ENCODE measurements at regions of chr4 and their contacts with region 1.

Region 1: GRCh38 chr4:74109116-74109869 is 10.3 kb upstream of the CXCL2 start:
- DNase-seq: peak; percentile 99
- ATAC-seq: peak; percentile 79
- H3K4me3 ChIP-seq: peak overlapping the region; percentile 45
- H3K27ac ChIP-seq: peak overlapping the region; percentile 96
- H3K4me1 ChIP-seq: peaks cover 65% of the 10 kb centered on the region
- H3K27me3 ChIP-seq: no peaks in the 10 kb centered on the region
- CTCF ChIP-seq: no peak

Region 2: DNA sequence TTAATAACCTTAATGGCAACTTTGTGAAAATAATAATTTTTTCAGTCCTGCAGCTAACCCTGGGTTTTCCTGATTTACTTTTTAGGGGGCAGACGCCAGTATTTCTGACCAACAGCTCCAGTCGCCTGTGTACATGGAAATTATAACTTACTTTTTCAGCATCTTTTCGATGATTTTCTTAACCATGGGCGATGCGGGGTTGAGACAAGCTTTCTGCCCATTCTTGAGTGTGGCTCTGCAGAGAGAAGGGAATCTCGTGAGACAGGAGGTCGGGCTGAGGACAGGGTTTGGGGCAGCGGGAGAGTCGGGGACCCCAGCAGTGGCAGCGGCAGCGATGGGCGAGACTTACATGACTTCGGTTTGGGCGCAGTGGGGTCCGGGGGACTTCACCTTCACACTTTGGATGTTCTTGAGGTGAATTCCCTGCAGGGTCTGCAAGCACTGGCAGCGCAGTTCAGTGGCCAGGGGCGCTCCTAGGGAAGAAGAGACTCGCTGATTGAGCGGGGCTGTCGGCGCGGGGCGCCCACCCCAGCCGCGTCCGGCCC is 10.8 kb before region 1 on chr4:
- CTCF ChIA-PET with region 1: interaction called, 6 read pairs
- POLR2A ChIA-PET with region 1: interaction called, 28 read pairs
- intact Hi-C with region 1: loop called (anchors 1 kb)
- DNase-seq: no peak
- ATAC-seq: peak; percentile 5
- H3K4me3 ChIP-seq: peak overlapping the region; percentile 78
- H3K27ac ChIP-seq: peak overlapping the region; percentile 98
- H3K4me1 ChIP-seq: peaks cover 28% of the 10 kb centered on the region
- H3K27me3 ChIP-seq: no peaks in the 10 kb centered on the region
- CTCF ChIP-seq: no peak